CD8-positive, alpha-beta T cell (primary cell): ENCODE measurements at regions of chr9 and their contacts with region 1.

Region 1: GRCh38 chr9:112793213-112793810 is 42.8 kb downstream of the SNX30 start:
- DNase-seq: peak; percentile 69 to 91 (median 84)
- ATAC-seq: peak; percentile 98
- H3K4me3 ChIP-seq: no peak overlapping the region
- H3K4me3 Mint-ChIP-seq: no peak overlapping the region
- H3K27ac ChIP-seq: no peak overlapping the region
- H3K27ac Mint-ChIP-seq: peak overlapping the region; percentile 38
- H3K4me1 ChIP-seq: no peaks in the 10 kb centered on the region
- H3K4me1 Mint-ChIP-seq: peaks cover 11% of the 10 kb centered on the region
- H3K27me3 ChIP-seq: no peaks in the 10 kb centered on the region
- H3K27me3 Mint-ChIP-seq: no peaks in the 10 kb centered on the region
- CTCF ChIP-seq: peak; percentile 65

Region 2: DNA sequence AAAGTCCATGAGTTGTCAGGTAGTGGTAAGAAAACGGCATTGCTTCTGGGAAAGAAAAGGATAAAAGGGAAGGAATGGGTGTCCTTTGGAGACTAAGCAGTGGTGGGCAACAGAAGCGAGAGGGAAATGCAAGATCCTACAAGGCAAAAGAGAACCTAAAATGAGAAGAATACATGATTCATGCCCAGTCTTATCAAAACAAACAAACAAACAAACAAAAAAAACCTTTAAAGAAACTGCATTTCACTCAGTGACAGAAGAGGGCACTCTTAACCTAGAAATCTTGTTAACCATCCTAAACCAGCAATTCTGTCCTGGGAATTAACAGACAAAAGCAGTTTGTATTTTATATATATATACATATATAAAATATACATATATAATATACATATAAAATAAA is 706.7 kb before region 1 on chr9:
- CTCF ChIA-PET with region 1: interaction called, 4 read pairs
- POLR2A ChIA-PET with region 1: no interaction called
- intact Hi-C with region 1: loop called in 1 of 2 experiments (anchors 5 kb)
- DNase-seq: peak in 2 of 9 experiments; percentile 31 to 42
- ATAC-seq: no peak
- H3K4me3 ChIP-seq: no peak overlapping the region
- H3K4me3 Mint-ChIP-seq: no peak overlapping the region
- H3K27ac ChIP-seq: no peak overlapping the region
- H3K27ac Mint-ChIP-seq: no peak overlapping the region
- H3K4me1 ChIP-seq: no peaks in the 10 kb centered on the region
- H3K4me1 Mint-ChIP-seq: no peaks in the 10 kb centered on the region
- H3K27me3 ChIP-seq: no peaks in the 10 kb centered on the region
- H3K27me3 Mint-ChIP-seq: no peaks in the 10 kb centered on the region
- CTCF ChIP-seq: peak; percentile 55

Region 3: GRCh38 chr9:112443200-112443599 is 350.1 kb before region 1 on chr9:
- CTCF ChIA-PET with region 1: interaction called, 32 read pairs
- POLR2A ChIA-PET with region 1: no interaction called
- intact Hi-C with region 1: loop called (anchors 1 kb)
- DNase-seq: peak in 5 of 9 experiments; percentile 7 to 60 (median 40)
- ATAC-seq: peak; percentile 48
- H3K4me3 ChIP-seq: no peak overlapping the region
- H3K4me3 Mint-ChIP-seq: no peak overlapping the region
- H3K27ac ChIP-seq: no peak overlapping the region
- H3K27ac Mint-ChIP-seq: no peak overlapping the region
- H3K4me1 ChIP-seq: no peaks in the 10 kb centered on the region
- H3K4me1 Mint-ChIP-seq: no peaks in the 10 kb centered on the region
- H3K27me3 ChIP-seq: no peaks in the 10 kb centered on the region
- H3K27me3 Mint-ChIP-seq: no peaks in the 10 kb centered on the region
- CTCF ChIP-seq: peak; percentile 55

Region 4: DNA sequence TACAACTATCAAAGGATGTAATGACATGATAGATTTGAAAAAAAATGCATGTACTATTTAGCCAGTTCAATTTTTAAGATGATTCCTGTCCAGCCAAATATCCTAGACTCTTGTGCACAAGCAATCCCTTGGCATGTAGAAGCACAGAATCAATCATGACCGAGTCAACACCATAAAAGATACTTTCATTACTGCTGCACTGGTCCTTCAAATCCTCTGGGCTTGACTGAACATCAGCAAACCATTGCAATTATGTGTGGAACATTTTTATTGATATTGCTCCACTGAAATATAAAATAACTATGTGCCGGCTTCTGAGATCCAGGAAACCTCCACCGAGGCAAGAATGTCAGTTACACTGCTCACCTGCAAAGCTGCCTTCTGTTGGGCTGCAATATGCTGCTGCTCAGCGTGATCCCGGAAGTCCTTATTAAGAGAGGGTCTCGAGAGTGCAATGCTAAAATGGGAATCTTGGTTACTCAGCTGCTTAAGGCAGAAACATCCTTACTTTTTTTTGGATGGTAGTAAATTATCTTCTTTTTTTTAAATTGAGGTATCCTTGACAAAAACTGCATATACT is 104.1 kb before region 1 on chr9:
- CTCF ChIA-PET with region 1: interaction called, 4 read pairs
- POLR2A ChIA-PET with region 1: no interaction called
- intact Hi-C with region 1: loop called in 1 of 2 experiments (anchors 5 kb)
- DNase-seq: no peak
- ATAC-seq: no peak
- H3K4me3 ChIP-seq: no peak overlapping the region
- H3K4me3 Mint-ChIP-seq: no peak overlapping the region
- H3K27ac ChIP-seq: no peak overlapping the region
- H3K27ac Mint-ChIP-seq: no peak overlapping the region
- H3K4me1 ChIP-seq: no peaks in the 10 kb centered on the region
- H3K4me1 Mint-ChIP-seq: no peaks in the 10 kb centered on the region
- H3K27me3 ChIP-seq: no peaks in the 10 kb centered on the region
- H3K27me3 Mint-ChIP-seq: no peaks in the 10 kb centered on the region
- CTCF ChIP-seq: no peak

Region 5: GRCh38 chr9:112831281-112831851 is 38.1 kb after region 1 on chr9:
- CTCF ChIA-PET with region 1: no interaction called
- POLR2A ChIA-PET with region 1: no interaction called
- intact Hi-C with region 1: no loop called
- DNase-seq: no peak
- ATAC-seq: no peak
- H3K4me3 ChIP-seq: no peak overlapping the region
- H3K4me3 Mint-ChIP-seq: no peak overlapping the region
- H3K27ac ChIP-seq: no peak overlapping the region
- H3K27ac Mint-ChIP-seq: no peak overlapping the region
- H3K4me1 ChIP-seq: no peaks in the 10 kb centered on the region
- H3K4me1 Mint-ChIP-seq: peaks cover 4% of the 10 kb centered on the region
- H3K27me3 ChIP-seq: no peaks in the 10 kb centered on the region
- H3K27me3 Mint-ChIP-seq: no peaks in the 10 kb centered on the region
- CTCF ChIP-seq: no peak